B cell (primary cell): ENCODE measurements at regions of chr6 and their contacts with region 1.

Region 1: DNA sequence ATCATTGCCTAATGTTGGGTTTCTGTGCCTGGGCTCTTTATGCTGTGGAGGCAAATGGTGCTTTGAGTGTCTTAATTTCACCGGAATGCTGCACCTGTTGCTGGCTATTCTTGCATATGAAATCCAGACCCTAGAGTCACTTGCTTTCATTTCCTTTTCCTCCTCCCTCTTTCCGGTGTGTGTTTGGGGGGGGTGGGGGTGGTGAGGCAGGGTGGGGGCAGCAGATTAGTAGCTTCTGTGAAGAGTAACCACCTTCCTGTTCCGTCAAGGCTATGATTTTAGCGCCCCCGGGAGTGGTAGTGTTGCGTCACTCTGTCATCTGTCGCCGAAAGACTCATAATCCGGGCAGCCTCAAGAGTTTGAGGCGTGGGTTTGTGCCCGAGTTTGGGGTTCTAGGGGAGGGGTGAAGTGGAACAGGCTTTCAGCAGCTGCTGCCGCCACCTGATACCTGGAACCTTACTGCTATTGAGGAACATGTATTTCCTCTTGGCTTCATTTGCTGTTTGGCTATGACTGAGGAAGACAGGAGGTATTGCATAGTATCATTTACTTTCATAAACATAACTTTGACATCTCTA is 49.1 kb downstream of the UTRN start:
- DNase-seq: peak; percentile 92
- ATAC-seq: peak; percentile 76
- H3K4me3 ChIP-seq: peak overlapping the region in 4 of 5 experiments; percentile 34 to 53 (median 36)
- H3K4me3 Mint-ChIP-seq: peak overlapping the region; percentile 82
- H3K27ac ChIP-seq: peak overlapping the region; percentile 82 to 94
- H3K27ac Mint-ChIP-seq: peak overlapping the region; percentile 94
- H3K4me1 ChIP-seq: peaks cover 56 to 61% of the 10 kb centered on the region in 2 donors
- H3K4me1 Mint-ChIP-seq: peaks cover 73% of the 10 kb centered on the region
- H3K27me3 ChIP-seq: no peaks in the 10 kb centered on the region
- H3K27me3 Mint-ChIP-seq: no peaks in the 10 kb centered on the region
- CTCF ChIP-seq: no peak

Region 2: DNA sequence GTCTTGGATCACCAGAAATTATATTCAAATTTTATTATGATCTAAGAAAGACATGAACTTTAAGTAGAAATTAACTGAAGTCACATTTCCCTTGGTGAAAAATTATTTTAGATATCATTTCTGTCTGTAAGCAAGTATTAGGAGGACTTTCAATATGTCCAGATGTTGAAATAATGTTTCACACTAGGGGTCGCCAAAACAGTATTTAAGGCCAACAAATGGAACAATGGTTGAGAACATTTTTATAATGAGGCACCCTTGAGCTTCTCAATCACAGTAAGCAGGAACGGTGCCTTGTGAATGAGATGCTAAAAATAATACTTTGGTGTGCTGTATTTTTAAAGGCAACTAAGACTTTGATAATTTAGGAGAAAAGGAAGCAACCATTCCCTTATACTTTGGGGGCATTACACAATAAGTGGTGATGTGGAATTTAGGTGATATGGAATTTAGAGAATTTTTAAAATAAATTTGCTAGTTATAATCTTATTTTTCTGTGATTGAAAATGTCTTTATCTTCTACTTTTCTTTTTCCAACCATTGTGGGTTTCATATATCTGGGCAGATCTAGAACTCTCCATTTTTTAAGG is 229.2 kb before region 1 on chr6:
- CTCF ChIA-PET with region 1: no interaction called
- POLR2A ChIA-PET with region 1: no interaction called
- intact Hi-C with region 1: loop called (anchors 2 kb)
- DNase-seq: peak; percentile 81
- ATAC-seq: peak; percentile 80
- H3K4me3 ChIP-seq: no peak overlapping the region
- H3K4me3 Mint-ChIP-seq: no peak overlapping the region
- H3K27ac ChIP-seq: no peak overlapping the region
- H3K27ac Mint-ChIP-seq: no peak overlapping the region
- H3K4me1 ChIP-seq: no peaks in the 10 kb centered on the region
- H3K4me1 Mint-ChIP-seq: no peaks in the 10 kb centered on the region
- H3K27me3 ChIP-seq: no peaks in the 10 kb centered on the region
- H3K27me3 Mint-ChIP-seq: no peaks in the 10 kb centered on the region
- CTCF ChIP-seq: peak; percentile 84

Region 3: DNA sequence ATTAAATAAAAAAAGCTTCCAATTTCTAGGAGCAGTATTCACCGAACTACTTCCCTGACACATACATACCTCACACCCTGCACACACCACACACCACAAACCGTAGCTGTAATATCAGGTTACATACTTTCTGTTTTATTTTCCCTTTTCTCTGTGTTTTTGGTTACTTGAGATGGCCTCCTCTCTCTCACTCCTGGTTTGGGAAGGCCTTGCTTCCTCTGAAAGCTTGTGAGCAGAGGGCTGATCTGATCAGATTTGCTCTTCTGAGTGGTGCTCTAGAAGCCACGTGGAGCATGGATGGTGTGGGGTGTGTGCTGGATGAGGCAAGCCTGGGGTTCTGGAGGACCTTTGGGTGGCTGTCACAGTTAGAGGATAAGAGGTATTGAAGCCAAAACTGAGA is 28.2 kb before region 1 on chr6:
- CTCF ChIA-PET with region 1: interaction called, 4 read pairs
- POLR2A ChIA-PET with region 1: interaction called, 3 read pairs
- intact Hi-C with region 1: loop called (anchors 2 kb)
- DNase-seq: no peak
- ATAC-seq: no peak
- H3K4me3 ChIP-seq: no peak overlapping the region
- H3K4me3 Mint-ChIP-seq: no peak overlapping the region
- H3K27ac ChIP-seq: no peak overlapping the region
- H3K27ac Mint-ChIP-seq: no peak overlapping the region
- H3K4me1 ChIP-seq: peaks cover 7 to 10% of the 10 kb centered on the region in 2 donors
- H3K4me1 Mint-ChIP-seq: peaks cover 8% of the 10 kb centered on the region
- H3K27me3 ChIP-seq: peaks cover 0 to 3% (median 0%) of the 10 kb centered on the region in 4 experiments
- H3K27me3 Mint-ChIP-seq: peaks cover 19% of the 10 kb centered on the region
- CTCF ChIP-seq: no peak

Region 4: DNA sequence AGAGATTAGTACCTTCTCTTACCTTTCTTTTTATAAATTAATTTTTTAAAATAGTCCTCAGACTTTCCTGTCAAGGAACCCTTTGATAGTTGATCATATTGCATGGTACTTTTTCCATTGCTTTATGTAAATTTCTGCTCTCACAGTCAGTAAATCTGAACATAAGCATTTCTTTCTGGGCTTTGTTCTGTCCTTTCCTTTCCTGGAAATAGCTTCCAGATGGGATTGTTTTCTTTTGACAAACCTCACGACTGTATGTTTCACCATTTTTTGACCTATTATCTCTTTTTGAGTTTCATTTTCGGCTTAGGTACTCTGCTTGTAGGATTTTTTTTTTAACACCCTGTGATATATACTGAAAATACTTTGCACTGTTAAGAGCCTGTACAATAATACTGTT is 16.5 kb before region 1 on chr6:
- CTCF ChIA-PET with region 1: no interaction called
- POLR2A ChIA-PET with region 1: no interaction called
- intact Hi-C with region 1: no loop called
- DNase-seq: no peak
- ATAC-seq: no peak
- H3K4me3 ChIP-seq: no peak overlapping the region
- H3K4me3 Mint-ChIP-seq: no peak overlapping the region
- H3K27ac ChIP-seq: no peak overlapping the region
- H3K27ac Mint-ChIP-seq: no peak overlapping the region
- H3K4me1 ChIP-seq: no peaks in the 10 kb centered on the region
- H3K4me1 Mint-ChIP-seq: peaks cover 11% of the 10 kb centered on the region
- H3K27me3 ChIP-seq: no peaks in the 10 kb centered on the region
- H3K27me3 Mint-ChIP-seq: no peaks in the 10 kb centered on the region
- CTCF ChIP-seq: no peak

Region 5: GRCh38 chr6:144377586-144378210 is 43.5 kb after region 1 on chr6:
- CTCF ChIA-PET with region 1: no interaction called
- POLR2A ChIA-PET with region 1: no interaction called
- intact Hi-C with region 1: no loop called
- DNase-seq: no peak
- ATAC-seq: no peak
- H3K4me3 ChIP-seq: no peak overlapping the region
- H3K4me3 Mint-ChIP-seq: no peak overlapping the region
- H3K27ac ChIP-seq: no peak overlapping the region
- H3K27ac Mint-ChIP-seq: no peak overlapping the region
- H3K4me1 ChIP-seq: peaks cover 11 to 13% of the 10 kb centered on the region in 2 donors
- H3K4me1 Mint-ChIP-seq: peaks cover 36% of the 10 kb centered on the region
- H3K27me3 ChIP-seq: no peaks in the 10 kb centered on the region
- H3K27me3 Mint-ChIP-seq: no peaks in the 10 kb centered on the region
- CTCF ChIP-seq: no peak